ENCODE measurements at regions of chr17 and their contacts with region 1.

Region 1: GRCh38 chr17:16380640-16381495 is at the start of gene UBB:
- DNase-seq: peak; percentile 98
- ATAC-seq: peak; percentile 97
- H3K4me3 Mint-ChIP-seq: peak within 1 kb of the TSS; percentile 90
- H3K27ac Mint-ChIP-seq: peak within 1 kb of the TSS; percentile 98
- H3K4me1 Mint-ChIP-seq: peaks cover 35% of the 10 kb centered on the region
- H3K27me3 Mint-ChIP-seq: no peaks in the 10 kb centered on the region
- total RNA-seq, gene UBB: 1,578 to 1,806 TPM

Region 2: DNA sequence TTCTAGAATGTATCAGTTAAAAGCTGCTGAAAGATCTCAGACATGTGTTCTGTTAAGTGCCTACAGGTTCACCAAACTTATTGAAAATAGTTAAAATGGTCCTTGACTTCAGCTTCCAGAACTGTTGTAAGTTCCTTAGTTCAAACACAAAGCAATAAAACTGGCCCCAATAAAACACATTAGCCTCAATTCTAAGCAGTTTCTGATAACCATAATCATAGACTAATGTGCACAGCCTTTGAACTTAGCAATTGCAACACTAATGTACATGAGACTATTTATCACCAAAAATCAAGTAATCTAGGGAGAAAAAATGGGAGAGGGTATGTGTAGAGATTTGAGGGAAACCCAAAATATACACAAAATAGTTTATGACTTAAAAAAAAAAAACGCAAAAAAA is 148.5 kb before region 1 on chr17:
- CTCF ChIA-PET with region 1: interaction called, 6 read pairs
- POLR2A ChIA-PET with region 1: no interaction called
- intact Hi-C with region 1: loop called in 1 of 2 experiments (anchors 1 kb)
- DNase-seq: no peak
- ATAC-seq: no peak
- H3K4me3 Mint-ChIP-seq: no peak overlapping the region
- H3K27ac Mint-ChIP-seq: no peak overlapping the region
- H3K4me1 Mint-ChIP-seq: peaks cover 22% of the 10 kb centered on the region
- H3K27me3 Mint-ChIP-seq: no peaks in the 10 kb centered on the region

Region 3: GRCh38 chr17:16363749-16364536 is 16.9 kb before region 1 on chr17:
- CTCF ChIA-PET with region 1: interaction called, 26 read pairs
- POLR2A ChIA-PET with region 1: interaction called, 3 read pairs
- intact Hi-C with region 1: no loop called
- DNase-seq: peak; percentile 89
- ATAC-seq: peak; percentile 98
- H3K4me3 Mint-ChIP-seq: no peak overlapping the region
- H3K27ac Mint-ChIP-seq: no peak overlapping the region
- H3K4me1 Mint-ChIP-seq: no peaks in the 10 kb centered on the region
- H3K27me3 Mint-ChIP-seq: no peaks in the 10 kb centered on the region

Region 4: DNA sequence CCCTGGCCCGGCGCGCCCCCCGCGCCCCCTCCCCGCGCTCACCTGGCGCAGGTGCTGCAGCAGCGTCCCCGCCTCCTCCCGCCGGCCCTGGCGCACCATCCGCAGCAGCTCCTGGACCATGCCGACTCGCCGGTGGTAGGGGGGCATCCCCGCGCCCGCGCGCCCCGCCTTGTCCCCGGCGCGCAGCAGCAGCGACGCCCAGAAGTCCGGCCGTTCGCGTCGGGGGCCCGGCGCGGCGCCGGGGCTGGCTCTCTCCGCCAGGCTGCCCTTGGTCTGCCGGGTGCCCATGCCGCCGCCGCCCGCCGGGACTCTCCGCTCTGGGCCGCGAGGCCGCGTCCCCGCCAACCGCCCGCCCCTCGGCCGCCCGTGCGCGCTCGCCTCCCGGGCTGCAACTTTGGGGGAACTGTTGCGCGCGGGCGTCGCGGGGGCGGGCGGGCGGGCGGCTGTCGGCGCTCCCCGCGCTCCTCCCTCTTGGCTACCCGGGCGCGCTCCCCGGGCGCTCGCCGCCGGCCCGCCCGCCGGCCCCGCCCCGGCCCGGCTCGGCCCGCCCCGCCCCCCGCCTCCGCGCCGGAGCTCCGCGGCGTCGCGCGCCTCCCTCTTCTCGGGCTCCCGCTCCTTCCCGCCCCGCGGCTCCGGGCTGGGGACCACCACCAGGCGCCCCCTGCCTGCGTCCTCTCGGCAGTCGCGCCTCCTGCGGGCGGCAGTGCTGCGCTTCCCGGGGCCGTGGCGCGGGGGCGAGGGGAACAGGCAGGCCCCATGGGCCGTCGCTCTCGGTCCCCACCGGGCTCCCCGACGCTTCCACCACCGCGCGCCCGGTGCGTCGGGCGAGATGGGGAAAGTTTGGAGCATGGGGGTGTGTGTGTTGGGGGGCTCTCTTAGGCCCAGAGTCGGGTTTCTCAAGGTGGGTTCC is 111.1 kb after region 1 on chr17 and contains the start of gene LRRC75A:
- CTCF ChIA-PET with region 1: no interaction called
- POLR2A ChIA-PET with region 1: no interaction called
- intact Hi-C with region 1: loop called in 1 of 2 experiments (anchors 1 kb)
- DNase-seq: peak; percentile 72
- ATAC-seq: peak; percentile 87
- H3K4me3 Mint-ChIP-seq: peak within 1 kb of the TSS; percentile 66
- H3K27ac Mint-ChIP-seq: no peak within 1 kb of the TSS
- H3K4me1 Mint-ChIP-seq: peaks cover 5% of the 10 kb centered on the region
- H3K27me3 Mint-ChIP-seq: peaks cover 9% of the 10 kb centered on the region
- total RNA-seq, gene LRRC75A: 1.1 to 1.2 TPM

Region 5: GRCh38 chr17:16568541-16569357 is 187.9 kb after region 1 on chr17 and contains the start of gene ZNF287:
- CTCF ChIA-PET with region 1: no interaction called
- POLR2A ChIA-PET with region 1: no interaction called
- intact Hi-C with region 1: loop called in 1 of 2 experiments (anchors 1 kb)
- DNase-seq: peak; percentile 96
- ATAC-seq: peak; percentile 99
- H3K4me3 Mint-ChIP-seq: peak within 1 kb of the TSS; percentile 79
- H3K27ac Mint-ChIP-seq: no peak within 1 kb of the TSS
- H3K4me1 Mint-ChIP-seq: peaks cover 14% of the 10 kb centered on the region
- H3K27me3 Mint-ChIP-seq: peaks cover 3% of the 10 kb centered on the region
- total RNA-seq, gene ZNF287: 9.4 TPM

Region 6: GRCh38 chr17:17303010-17303846 is 922.4 kb after region 1 on chr17 and contains the start of gene NT5M:
- CTCF ChIA-PET with region 1: no interaction called
- POLR2A ChIA-PET with region 1: no interaction called
- intact Hi-C with region 1: loop called in 1 of 2 experiments (anchors 5 kb)
- DNase-seq: peak; percentile 84
- ATAC-seq: peak; percentile 58
- H3K4me3 Mint-ChIP-seq: peak within 1 kb of the TSS; percentile 71
- H3K27ac Mint-ChIP-seq: peak within 1 kb of the TSS; percentile 87
- H3K4me1 Mint-ChIP-seq: peaks cover 28% of the 10 kb centered on the region
- H3K27me3 Mint-ChIP-seq: no peaks in the 10 kb centered on the region
- total RNA-seq, gene NT5M: 4.3 to 5.4 TPM